Panc1 (cell line): ENCODE measurements at regions of chr9 and their contacts with region 1.

Region 1: DNA sequence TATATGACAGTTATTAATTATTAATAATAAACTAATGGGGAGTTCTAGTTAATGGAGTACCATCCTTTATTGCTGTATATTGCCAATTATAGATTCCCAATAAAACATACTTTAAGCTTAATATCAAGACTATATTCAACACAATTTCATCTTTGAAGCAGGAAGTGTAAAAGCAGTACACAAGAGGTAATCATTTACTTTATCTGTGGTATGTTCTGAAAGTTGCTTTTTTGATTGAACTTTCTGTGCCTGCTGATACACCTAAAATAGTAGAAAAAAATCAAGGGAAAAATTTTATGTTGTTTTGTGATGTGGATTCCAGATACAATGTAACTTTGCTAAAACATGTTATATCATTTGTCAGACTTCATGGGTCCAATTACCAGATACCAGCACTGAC is 58.0 kb downstream of the ACO1 start:
- DNase-seq: no peak
- ATAC-seq: no peak
- H3K4me3 ChIP-seq: no peak overlapping the region
- H3K27ac ChIP-seq: no peak overlapping the region
- H3K4me1 ChIP-seq: no peaks in the 10 kb centered on the region
- H3K27me3 ChIP-seq: no peaks in the 10 kb centered on the region
- CTCF ChIP-seq: no peak

Region 2: GRCh38 chr9:32571969-32572899 is 129.8 kb after region 1 on chr9:
- CTCF ChIA-PET with region 1: no interaction called
- POLR2A ChIA-PET with region 1: no interaction called
- in situ Hi-C with region 1: no loop called
- intact Hi-C with region 1: loop called (anchors 10 kb)
- DNase-seq: peak; percentile 67
- ATAC-seq: peak; percentile 91
- H3K4me3 ChIP-seq: peak overlapping the region; percentile 95 to 97
- H3K27ac ChIP-seq: peak overlapping the region; percentile 97
- H3K4me1 ChIP-seq: peaks cover 14% of the 10 kb centered on the region; the same call in 1 of the 2 replicates
- H3K27me3 ChIP-seq: no peaks in the 10 kb centered on the region
- CTCF ChIP-seq: peak; percentile 89